ENCODE measurements at regions of chr5 and their contacts with region 1.

Region 1: DNA sequence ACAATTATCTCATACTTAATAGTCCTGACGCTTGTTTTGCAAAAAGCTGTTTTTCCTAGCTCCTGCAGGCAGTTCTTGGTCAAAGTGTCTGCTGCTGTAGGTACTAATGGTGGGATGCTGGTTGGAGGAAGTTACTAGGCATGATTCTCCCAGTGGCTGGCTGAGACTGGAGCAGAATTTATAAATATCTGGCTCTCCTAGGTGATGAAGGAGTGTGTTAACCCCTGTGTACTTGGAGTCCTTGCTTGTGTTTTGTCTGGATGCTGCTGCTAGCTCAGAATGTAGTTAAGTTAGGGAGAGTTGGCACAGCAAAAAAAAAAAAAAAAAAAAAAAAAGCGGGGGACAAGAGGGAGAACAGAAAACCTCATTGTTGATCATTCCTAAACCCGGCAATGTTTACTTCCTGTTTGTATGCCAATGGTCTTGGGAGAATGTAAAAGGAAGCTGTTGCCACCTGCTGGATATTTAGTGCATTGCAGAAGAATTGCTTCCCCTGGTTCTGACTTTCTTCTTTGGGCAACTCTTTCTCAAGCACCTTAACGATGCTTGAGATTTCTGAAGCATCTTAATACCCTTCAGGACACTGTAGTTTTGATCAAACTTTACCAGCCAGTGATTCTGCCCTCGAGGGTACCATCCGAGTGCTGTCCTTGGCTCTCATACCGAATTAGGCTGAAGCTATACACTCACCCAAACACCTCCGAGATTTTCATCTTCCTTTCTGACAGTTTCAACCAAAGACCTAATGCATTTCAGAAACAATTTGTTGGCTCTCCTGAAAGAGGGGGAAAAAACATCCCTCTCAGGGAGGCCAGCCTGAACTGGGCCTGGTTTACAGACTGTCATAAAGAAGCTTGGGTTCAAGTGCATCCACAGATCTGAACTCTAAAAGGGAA is 71.7 kb upstream of the WWC1 start:
- DNase-seq: peak; percentile 80
- H3K4me3 ChIP-seq: peak overlapping the region in 1 of 2 experiments; percentile 36; a peak in 2 of 4 replicates
- H3K27ac ChIP-seq: no peak overlapping the region
- H3K4me1 ChIP-seq: peaks cover 0 to 4% of the 10 kb centered on the region in 2 experiments; a peak in 1 of 4 replicates
- H3K27me3 ChIP-seq: peaks cover 7% of the 10 kb centered on the region; the same call in 1 of the 2 replicates
- CTCF ChIP-seq: peak; percentile 90
- EP300 ChIP-seq: no peak
- RAD21 ChIP-seq: peak; percentile 97

Region 2: GRCh38 chr5:167582283-167582682 is 637.5 kb before region 1 on chr5:
- CTCF ChIA-PET with region 1: interaction called, 21 read pairs
- POLR2A ChIA-PET with region 1: no interaction called
- DNase-seq: peak; percentile 25
- H3K4me3 ChIP-seq: no peak overlapping the region
- H3K27ac ChIP-seq: no peak overlapping the region
- H3K4me1 ChIP-seq: no peaks in the 10 kb centered on the region; a peak in 1 of 4 replicates
- H3K27me3 ChIP-seq: peaks cover under 1% of the 10 kb centered on the region; the same call in 1 of the 2 replicates
- CTCF ChIP-seq: peak; percentile 65
- EP300 ChIP-seq: no peak
- RAD21 ChIP-seq: peak; percentile 71

Region 3: GRCh38 chr5:167723254-167723871 is 496.4 kb before region 1 on chr5:
- CTCF ChIA-PET with region 1: interaction called, 26 read pairs
- POLR2A ChIA-PET with region 1: no interaction called
- DNase-seq: peak; percentile 74
- H3K4me3 ChIP-seq: peak overlapping the region in 1 of 2 experiments; percentile 17; a peak in 1 of 4 replicates
- H3K27ac ChIP-seq: no peak overlapping the region
- H3K4me1 ChIP-seq: peaks cover 0 to 4% of the 10 kb centered on the region in 2 experiments; a peak in 2 of 4 replicates
- H3K27me3 ChIP-seq: no peaks in the 10 kb centered on the region
- CTCF ChIP-seq: peak; percentile 90
- EP300 ChIP-seq: no peak
- RAD21 ChIP-seq: peak; percentile 83

Region 4: DNA sequence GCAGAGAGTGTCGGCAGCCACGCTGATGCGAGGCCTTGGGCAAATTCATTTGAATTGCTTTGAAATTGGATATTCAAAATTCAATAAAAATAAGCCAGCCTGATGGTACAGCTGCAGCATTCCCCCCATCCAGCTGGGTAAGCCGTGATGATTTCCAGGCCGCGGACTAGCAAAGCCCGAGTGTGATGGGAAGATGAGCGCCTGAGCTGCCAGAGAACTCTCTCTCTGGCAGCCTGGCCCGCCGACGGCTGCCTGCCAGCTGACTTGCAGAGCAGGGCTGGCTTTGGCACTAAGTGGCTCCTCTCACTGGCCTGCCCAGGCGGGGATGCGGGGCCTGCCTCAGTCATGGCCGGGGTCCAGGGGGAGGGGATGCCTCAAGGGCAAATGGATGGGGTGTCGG is 196.6 kb before region 1 on chr5:
- CTCF ChIA-PET with region 1: interaction called, 16 read pairs
- POLR2A ChIA-PET with region 1: no interaction called
- DNase-seq: peak; percentile 87
- H3K4me3 ChIP-seq: no peak overlapping the region
- H3K27ac ChIP-seq: peak overlapping the region in 1 of 2 experiments; percentile 78; a peak in 2 of 4 replicates
- H3K4me1 ChIP-seq: peaks cover 0 to 23% of the 10 kb centered on the region in 2 experiments; a peak in 3 of 4 replicates
- H3K27me3 ChIP-seq: no peaks in the 10 kb centered on the region
- CTCF ChIP-seq: no peak
- EP300 ChIP-seq: peak in 1 of 2 experiments; percentile 70; a peak in 2 of 4 replicates
- RAD21 ChIP-seq: peak; percentile 22

Region 5: DNA sequence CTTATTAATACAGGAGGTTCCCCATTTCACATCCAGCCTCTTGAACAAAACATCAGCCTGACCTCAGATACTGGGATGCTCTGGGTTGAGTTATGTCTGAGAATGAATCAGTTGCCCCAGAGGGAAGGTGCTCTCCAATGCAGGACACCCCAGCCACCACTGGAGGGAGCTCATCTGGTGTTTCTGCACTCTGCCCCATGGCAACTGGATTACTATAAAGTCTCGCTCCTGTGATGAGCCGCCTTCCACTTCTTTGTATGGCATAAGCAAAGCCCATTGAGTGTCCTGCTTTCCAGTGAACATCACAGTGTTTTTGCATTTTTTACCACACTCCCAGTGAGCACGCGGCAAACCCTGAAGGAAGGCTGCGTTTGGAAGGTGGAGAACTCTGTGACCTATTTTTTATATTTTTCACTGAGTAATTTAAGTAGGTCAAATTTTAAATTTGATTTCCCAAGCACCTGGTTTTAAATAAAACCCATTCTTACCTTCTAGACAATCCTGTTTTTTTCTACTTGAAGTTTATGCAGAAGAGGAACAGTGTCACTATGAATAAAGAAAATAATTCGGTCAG is 105.2 kb before region 1 on chr5:
- CTCF ChIA-PET with region 1: interaction called, 43 read pairs
- POLR2A ChIA-PET with region 1: no interaction called
- DNase-seq: peak; percentile 57
- H3K4me3 ChIP-seq: no peak overlapping the region
- H3K27ac ChIP-seq: no peak overlapping the region
- H3K4me1 ChIP-seq: peaks cover 0 to 5% of the 10 kb centered on the region in 2 experiments; a peak in 1 of 4 replicates
- H3K27me3 ChIP-seq: no peaks in the 10 kb centered on the region
- CTCF ChIP-seq: peak; percentile 65
- EP300 ChIP-seq: no peak
- RAD21 ChIP-seq: peak; percentile 60

Region 6: DNA sequence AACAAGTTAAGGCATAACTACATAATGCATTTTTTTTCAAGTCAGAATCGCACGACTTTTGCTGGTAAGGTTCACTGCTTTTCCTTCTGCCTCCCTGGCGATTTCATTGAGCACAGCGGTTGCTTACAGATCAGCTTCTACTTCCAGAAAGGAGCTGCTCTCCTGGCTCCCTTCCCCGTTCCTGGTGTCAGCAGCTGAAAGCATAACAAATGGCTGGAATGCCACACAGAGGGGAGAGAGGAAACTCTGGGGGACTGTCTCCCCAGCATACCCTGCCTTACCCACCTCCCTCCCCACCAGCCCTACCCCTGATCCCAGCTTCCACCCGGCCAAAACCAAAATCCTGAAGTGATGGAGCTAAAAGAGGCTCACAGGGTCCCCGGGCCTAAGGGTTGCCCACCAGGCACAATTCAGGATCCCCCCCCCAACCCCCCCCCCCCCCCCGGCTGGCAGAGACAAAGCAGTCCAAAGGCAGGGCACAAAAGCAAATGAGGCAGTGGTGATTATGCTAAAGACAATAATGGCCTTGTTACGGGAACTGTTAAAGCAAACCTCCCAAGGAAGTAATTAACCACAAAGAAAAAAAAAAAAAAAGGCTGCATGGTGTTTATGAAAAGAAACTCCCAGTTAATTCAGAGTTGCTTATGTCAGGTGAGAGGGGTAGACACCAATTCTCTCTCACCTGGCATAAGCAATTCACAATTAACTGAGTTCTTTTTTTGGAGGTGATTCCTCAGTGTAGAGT is 54.4 kb before region 1 on chr5:
- CTCF ChIA-PET with region 1: interaction called, 14 read pairs
- POLR2A ChIA-PET with region 1: no interaction called
- DNase-seq: no peak
- H3K4me3 ChIP-seq: no peak overlapping the region
- H3K27ac ChIP-seq: peak overlapping the region in 1 of 2 experiments; percentile 11; a peak in 1 of 4 replicates
- H3K4me1 ChIP-seq: peaks cover 0 to 23% of the 10 kb centered on the region in 2 experiments; a peak in 1 of 4 replicates
- H3K27me3 ChIP-seq: no peaks in the 10 kb centered on the region
- CTCF ChIP-seq: no peak
- EP300 ChIP-seq: no peak
- RAD21 ChIP-seq: no peak

Region 7: DNA sequence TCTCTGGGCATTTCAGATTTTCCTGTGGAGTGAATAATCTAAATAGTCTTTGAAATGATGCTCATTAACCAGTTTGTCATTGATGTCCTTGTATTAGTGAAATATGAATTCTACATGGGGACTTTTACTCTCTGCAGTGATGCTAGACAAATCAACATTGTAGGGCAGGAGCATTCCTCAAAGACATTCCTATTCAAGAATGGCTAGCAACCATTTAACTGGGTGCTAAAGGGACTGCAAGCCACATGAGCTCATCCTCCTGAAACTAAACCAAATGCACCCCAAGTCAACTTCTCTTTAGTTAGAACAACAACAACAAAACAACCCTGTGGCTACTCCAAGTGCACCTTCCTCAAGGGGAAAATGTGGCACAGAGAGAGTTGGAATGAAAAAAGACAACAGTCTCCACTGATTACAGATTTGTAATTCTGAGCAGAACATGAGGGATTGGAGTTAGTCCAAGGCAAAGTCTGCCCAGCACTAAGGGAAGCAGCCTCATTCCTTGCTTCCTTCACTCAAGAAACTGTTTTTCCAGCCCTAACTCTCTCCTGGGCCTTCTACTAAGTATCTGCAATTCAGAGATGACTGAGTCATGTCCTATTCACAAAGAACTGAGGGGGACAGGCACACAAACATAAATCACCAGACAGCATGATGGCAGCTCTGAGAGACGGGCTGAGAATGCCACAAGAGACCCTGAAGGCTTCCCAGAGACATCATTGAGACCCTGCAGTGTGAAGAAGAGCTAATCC is 10.3 kb before region 1 on chr5:
- CTCF ChIA-PET with region 1: interaction called, 19 read pairs
- POLR2A ChIA-PET with region 1: no interaction called
- DNase-seq: no peak
- H3K4me3 ChIP-seq: no peak overlapping the region
- H3K27ac ChIP-seq: no peak overlapping the region
- H3K4me1 ChIP-seq: peaks cover 0 to 3% of the 10 kb centered on the region in 2 experiments; a peak in 1 of 4 replicates
- H3K27me3 ChIP-seq: no peaks in the 10 kb centered on the region
- CTCF ChIP-seq: no peak
- EP300 ChIP-seq: no peak
- RAD21 ChIP-seq: no peak

Measured in SK-N-SH (cell line).